ENCODE measurements at regions of chr12 and their contacts with region 1.

Region 1: GRCh38 chr12:115752913-115753726 is 524.4 kb downstream of the MED13L start:
- DNase-seq: peak in 2 of 5 donors; percentile 0
- H3K4me3 ChIP-seq: no peak overlapping the region
- H3K4me3 Mint-ChIP-seq: no peak overlapping the region
- H3K27ac ChIP-seq: no peak overlapping the region
- H3K27ac Mint-ChIP-seq: no peak overlapping the region
- H3K4me1 ChIP-seq: no peaks in the 10 kb centered on the region
- H3K4me1 Mint-ChIP-seq: no peaks in the 10 kb centered on the region
- H3K27me3 ChIP-seq: no peaks in the 10 kb centered on the region
- H3K27me3 Mint-ChIP-seq: peaks cover 4 to 12% of the 10 kb centered on the region in 2 donors

Region 2: DNA sequence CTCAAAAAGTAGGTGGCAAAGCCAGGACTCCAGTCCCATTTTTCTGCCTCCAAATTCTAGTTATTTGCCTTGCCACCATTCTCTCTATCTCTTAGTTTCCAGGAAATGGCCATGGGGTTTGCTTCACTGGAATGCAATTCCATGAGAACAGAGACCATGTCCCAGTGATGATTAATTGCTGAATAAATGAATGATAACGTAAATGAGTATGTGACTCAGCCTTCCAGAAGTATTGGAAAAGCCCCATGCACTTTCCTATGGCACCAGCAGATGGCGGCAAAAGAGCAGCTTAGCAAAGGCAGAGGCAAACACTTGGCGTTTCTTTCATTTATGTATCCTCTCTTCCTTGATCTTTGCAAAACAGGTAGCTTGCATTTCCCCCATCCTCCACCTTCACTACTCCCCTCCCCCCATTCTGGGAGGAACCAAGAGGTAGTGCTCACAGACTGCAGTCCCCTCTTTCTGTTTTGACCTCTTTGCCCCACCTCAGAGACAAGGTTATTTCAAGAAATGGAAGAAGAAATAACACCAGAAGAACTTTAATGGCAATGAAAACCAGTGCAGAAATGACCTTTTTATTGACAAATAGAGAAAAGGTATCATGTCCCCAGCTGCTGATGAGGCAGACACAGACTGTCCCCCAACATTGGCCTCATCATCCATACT is 1090.5 kb before region 1 on chr12:
- CTCF ChIA-PET with region 1: no interaction called
- POLR2A ChIA-PET with region 1: no interaction called
- intact Hi-C with region 1: loop called (anchors 5 kb)
- DNase-seq: peak in 4 of 5 donors; percentile 29 to 46 (median 38)
- H3K4me3 ChIP-seq: no peak overlapping the region
- H3K4me3 Mint-ChIP-seq: no peak overlapping the region
- H3K27ac ChIP-seq: no peak overlapping the region
- H3K27ac Mint-ChIP-seq: no peak overlapping the region
- H3K4me1 ChIP-seq: no peaks in the 10 kb centered on the region
- H3K4me1 Mint-ChIP-seq: peaks cover 0 to 6% (median 2%) of the 10 kb centered on the region in 4 donors
- H3K27me3 ChIP-seq: peaks cover 11% of the 10 kb centered on the region
- H3K27me3 Mint-ChIP-seq: peaks cover 24 to 35% of the 10 kb centered on the region in 2 donors